ENCODE measurements at regions of chr11 and their contacts with region 1.

Region 1: DNA sequence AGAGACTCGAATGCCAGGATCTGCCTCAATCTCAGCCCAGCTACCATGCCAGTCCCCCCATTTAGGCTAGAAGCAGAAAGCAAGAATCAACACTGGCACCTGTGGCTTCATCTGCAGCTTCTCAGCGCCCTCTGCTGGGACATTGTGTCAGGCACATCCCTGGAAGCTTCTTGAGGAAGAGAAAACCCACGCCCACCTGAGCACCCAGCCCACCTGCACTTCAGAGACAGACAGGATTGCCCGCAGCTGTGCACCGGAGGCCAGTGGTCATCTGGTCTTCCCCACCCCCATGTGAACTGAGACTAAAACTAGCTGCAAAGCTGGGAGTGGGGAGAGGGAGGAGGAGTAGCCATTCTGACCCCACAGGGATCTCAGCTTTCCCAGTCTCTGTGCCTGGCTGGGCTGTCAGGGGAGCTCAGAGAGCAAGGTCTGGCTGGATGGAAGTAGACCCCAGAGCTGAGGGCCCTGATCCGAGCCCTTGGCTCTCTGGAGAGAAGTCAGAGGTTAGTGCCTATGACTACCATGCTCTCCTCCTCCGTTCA is 66.8 kb downstream of the FEZ1 start:
- DNase-seq: peak; percentile 71
- ATAC-seq: peak; percentile 48

Region 2: GRCh38 chr11:125111343-125112207 is 317.7 kb before region 1 on chr11 and contains the start of gene TMEM218:
- intact Hi-C with region 1: loop called (anchors 10 kb)
- DNase-seq: peak; percentile 99
- ATAC-seq: peak; percentile 100
- total RNA-seq, gene TMEM218: 6.7 TPM